Posterior cingulate gyrus (tissue), 11 donors: ENCODE measurements at regions of chr6 and their contacts with region 1.

Region 1: GRCh38 chr6:136317021-136317694 is 27.5 kb upstream of the BCLAF1 start:
- DNase-seq: peak in 6 of 10 donors; percentile 29 to 88 (median 62)

Region 2: DNA sequence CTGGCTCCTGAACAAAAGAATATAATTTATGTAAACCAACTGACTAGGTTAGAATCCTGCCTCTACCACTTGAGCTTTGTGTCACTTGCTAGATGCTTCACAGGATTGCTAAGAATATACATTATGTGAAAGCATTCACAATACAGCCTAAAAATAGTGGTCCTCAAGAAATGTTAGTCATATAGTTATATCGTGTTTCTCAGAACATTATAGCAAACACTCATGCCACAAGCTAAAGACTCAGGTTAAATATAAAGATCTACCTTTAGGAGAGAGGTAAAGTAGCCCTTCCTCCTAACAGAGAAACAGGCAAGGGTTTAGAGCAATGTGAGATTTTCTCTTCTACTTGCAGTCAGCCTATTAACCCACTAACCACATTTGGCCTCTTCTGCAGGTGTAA is 1349.4 kb before region 1 on chr6:
- intact Hi-C with region 1: no loop called
- DNase-seq: no peak

Region 3: DNA sequence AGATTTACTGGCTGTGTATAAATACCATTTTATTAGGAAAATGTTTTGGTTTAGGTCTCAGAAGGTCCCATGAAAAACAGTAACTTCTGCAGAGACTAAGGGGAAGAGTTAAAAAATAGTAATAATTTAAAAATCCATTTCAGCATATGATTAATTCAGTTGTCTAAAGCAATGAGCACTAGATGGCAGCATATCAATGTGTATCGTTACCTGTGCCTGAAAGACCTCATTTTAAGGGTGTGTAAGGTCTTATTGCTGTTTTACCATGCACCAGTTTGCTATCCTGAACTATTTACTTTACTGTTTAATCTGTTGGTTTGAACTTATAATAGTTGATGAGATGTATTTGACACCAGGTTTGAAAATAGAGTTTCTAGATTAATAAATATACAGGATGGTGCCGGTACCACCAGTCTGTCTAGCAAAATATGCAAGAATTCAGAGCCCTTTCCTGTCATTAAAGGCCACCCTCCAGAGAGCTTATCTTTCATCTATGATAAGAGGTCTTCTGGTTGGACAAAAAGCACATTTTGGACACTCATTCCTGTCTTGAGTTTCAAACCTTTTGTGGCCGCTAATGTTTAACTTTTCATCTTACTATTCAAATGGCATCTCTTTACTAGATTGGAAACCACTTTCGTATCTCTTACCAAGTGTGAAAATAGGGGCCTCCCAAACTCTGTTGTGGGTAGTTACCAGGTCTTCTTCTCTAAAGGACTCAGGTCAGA is 810.7 kb before region 1 on chr6:
- intact Hi-C with region 1: loop called (anchors 10 kb)
- DNase-seq: no peak

Region 4: GRCh38 chr6:136249811-136250685 is 67.1 kb before region 1 on chr6 and contains the start of gene MTFR2:
- intact Hi-C with region 1: loop called (anchors 10 kb)
- DNase-seq: peak; percentile 84 to 98 (median 93)

Region 5: GRCh38 chr6:136550330-136551071 is 233.3 kb after region 1 on chr6 and contains the start of gene MAP7:
- intact Hi-C with region 1: no loop called
- DNase-seq: peak; percentile 28 to 93 (median 50)